ENCODE measurements at regions of chr4 and their contacts with region 1.

Region 1: GRCh38 chr4:6942238-6942800 is 32.7 kb downstream of the TBC1D14 start:
- DNase-seq: no peak
- H3K4me3 ChIP-seq: no peak overlapping the region
- H3K27ac ChIP-seq: no peak overlapping the region
- H3K4me1 ChIP-seq: peaks cover 16 to 52% (median 36%) of the 10 kb centered on the region in 4 experiments
- H3K27me3 ChIP-seq: no peaks in the 10 kb centered on the region
- CTCF ChIP-seq: no peak
- EP300 ChIP-seq: no peak
- POLR2A ChIP-seq: no peak
- RAD21 ChIP-seq: no peak

Region 2: GRCh38 chr4:6917461-6918271 is 24.7 kb before region 1 on chr4:
- CTCF ChIA-PET with region 1: interaction called, 28 read pairs
- POLR2A ChIA-PET with region 1: interaction called, 3 read pairs
- DNase-seq: no peak
- H3K4me3 ChIP-seq: no peak overlapping the region
- H3K27ac ChIP-seq: no peak overlapping the region
- H3K4me1 ChIP-seq: peaks cover 0 to 22% (median 9%) of the 10 kb centered on the region in 4 experiments; a peak in 5 of 7 replicates
- H3K27me3 ChIP-seq: no peaks in the 10 kb centered on the region
- CTCF ChIP-seq: peak in 2 of 3 experiments; percentile 36 to 80; a peak in 2 of 4 replicates
- EP300 ChIP-seq: no peak
- POLR2A ChIP-seq: no peak
- RAD21 ChIP-seq: peak; percentile 11 to 30; a peak in 2 of 4 replicates

Region 3: DNA sequence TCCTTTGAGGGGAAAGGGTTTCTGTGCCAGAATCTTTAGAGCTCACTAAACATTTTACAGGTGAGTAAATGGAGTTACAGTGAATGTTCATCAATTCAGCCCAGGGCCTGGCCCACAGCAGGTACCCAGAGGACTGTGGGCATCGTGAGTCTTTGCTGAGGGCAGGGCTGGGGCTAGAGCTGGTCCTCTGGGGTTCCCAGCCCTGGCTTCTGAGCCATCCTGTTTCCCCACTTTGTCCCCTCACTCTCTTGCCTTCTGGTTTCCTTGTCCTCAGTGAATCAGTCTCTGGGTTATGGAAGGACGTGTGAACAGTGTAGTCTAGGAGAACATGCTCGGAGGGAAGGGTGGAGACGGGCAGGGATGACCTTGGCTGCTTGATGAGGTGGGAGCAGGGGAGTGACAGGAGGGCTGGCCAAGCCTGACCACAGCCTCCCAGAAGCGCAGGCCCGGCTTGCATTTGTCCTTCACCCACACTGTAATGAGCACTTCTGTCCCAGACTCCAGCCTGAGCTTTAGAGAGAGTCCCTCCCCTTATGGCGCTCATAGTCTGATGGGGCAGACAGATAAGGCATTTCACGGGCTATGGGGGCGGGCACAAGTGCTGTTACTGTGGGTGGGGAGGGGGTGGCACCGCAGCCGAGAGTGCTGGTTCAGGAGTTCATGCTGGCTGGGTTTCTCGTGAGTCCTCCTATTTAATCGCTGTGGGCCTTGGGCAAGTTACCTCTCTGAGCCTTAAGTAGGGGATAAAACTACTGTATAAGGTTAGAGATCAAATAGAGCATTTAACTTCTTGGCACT is 15.4 kb before region 1 on chr4:
- CTCF ChIA-PET with region 1: interaction called, 11 read pairs
- POLR2A ChIA-PET with region 1: no interaction called
- DNase-seq: no peak
- H3K4me3 ChIP-seq: no peak overlapping the region
- H3K27ac ChIP-seq: no peak overlapping the region
- H3K4me1 ChIP-seq: peaks cover 0 to 9% (median 3%) of the 10 kb centered on the region in 4 experiments; a peak in 6 of 7 replicates
- H3K27me3 ChIP-seq: no peaks in the 10 kb centered on the region
- CTCF ChIP-seq: no peak
- EP300 ChIP-seq: no peak
- POLR2A ChIP-seq: no peak
- RAD21 ChIP-seq: no peak

Measured in H1 (cell line).